ENCODE measurements at regions of chr12 and their contacts with region 1.

Region 1: DNA sequence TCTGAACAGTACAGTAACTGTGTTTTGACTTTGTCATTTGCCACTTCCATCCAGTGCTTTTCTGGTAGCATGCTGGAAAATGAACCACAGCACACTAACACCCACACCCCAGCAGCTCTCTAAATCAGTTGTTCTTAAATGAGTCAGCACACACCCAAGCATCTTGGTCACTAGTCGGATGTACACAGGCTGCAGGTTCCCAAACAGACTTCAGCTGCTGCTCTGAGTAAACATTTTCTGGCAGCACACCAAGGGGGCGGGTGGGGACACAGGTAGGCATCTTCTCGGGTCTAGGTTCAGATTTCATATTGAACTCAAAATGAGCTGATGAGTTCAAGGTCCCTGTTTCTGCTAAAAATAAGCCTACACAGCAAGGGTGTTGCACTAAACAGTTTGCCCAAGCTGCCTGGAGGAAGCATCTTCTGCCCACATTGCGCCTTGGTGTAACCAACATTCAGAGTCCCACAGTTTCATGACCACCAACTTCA is 39.8 kb downstream of the IFNG start:
- DNase-seq: peak; percentile 74
- H3K4me3 Mint-ChIP-seq: peak overlapping the region; percentile 15
- H3K27ac Mint-ChIP-seq: no peak overlapping the region
- H3K4me1 Mint-ChIP-seq: peaks cover 48% of the 10 kb centered on the region
- H3K27me3 Mint-ChIP-seq: no peaks in the 10 kb centered on the region

Region 2: DNA sequence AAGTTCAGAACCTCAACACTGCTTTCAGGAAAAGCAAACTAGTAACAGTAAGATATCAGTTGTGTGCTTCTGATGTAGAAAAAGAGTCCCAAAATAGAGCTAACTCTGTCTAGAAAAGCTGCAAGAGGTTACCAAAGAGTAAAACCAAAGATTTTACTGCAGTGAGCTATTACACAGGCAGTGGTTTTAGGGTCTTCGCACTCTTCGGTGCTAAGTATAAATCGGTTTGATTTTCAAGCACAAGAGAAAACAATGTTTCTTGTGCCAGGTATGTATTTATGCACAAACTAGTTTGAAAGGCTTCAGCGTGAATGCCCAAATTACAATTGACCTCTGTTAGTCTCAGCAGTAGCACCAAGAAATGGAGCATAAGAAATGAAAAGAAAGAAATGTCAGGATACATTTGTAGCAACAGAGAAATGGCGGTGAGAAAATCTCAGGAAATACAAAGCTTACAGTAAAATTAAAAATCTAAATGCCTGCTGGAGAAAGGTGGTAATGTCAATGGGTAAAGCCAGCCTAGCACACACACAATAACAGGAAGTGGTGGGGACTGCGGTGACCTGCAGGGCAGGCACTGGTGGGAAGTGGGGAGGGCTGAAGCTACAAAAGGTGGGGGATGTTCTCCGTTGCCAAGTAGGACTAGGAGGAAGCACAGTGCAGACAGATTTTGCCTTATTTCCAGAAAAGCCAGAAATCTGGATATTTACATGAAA is 489.2 kb before region 1 on chr12:
- intact Hi-C with region 1: loop called (anchors 5 kb)
- DNase-seq: peak; percentile 81
- H3K4me3 Mint-ChIP-seq: peak overlapping the region; percentile 37
- H3K27ac Mint-ChIP-seq: peak overlapping the region; percentile 89
- H3K4me1 Mint-ChIP-seq: peaks cover 62% of the 10 kb centered on the region
- H3K27me3 Mint-ChIP-seq: no peaks in the 10 kb centered on the region

Region 3: GRCh38 chr12:67996347-67996746 is 123.4 kb before region 1 on chr12:
- intact Hi-C with region 1: loop called (anchors 1 kb)
- DNase-seq: no peak
- H3K4me3 Mint-ChIP-seq: no peak overlapping the region
- H3K27ac Mint-ChIP-seq: peak overlapping the region; percentile 1
- H3K4me1 Mint-ChIP-seq: peaks cover 69% of the 10 kb centered on the region
- H3K27me3 Mint-ChIP-seq: no peaks in the 10 kb centered on the region

Region 4: GRCh38 chr12:68137335-68137830 is 17.6 kb after region 1 on chr12:
- intact Hi-C with region 1: loop called (anchors 1 kb)
- DNase-seq: no peak
- H3K4me3 Mint-ChIP-seq: peak overlapping the region; percentile 61
- H3K27ac Mint-ChIP-seq: peak overlapping the region; percentile 91
- H3K4me1 Mint-ChIP-seq: peaks cover 75% of the 10 kb centered on the region
- H3K27me3 Mint-ChIP-seq: no peaks in the 10 kb centered on the region

Region 5: GRCh38 chr12:68180792-68181744 is 61.3 kb after region 1 on chr12:
- intact Hi-C with region 1: loop called (anchors 1 kb)
- DNase-seq: peak; percentile 67
- H3K4me3 Mint-ChIP-seq: peak overlapping the region; percentile 34
- H3K27ac Mint-ChIP-seq: peak overlapping the region; percentile 91
- H3K4me1 Mint-ChIP-seq: peaks cover 85% of the 10 kb centered on the region
- H3K27me3 Mint-ChIP-seq: no peaks in the 10 kb centered on the region

Region 6: GRCh38 chr12:68267892-68268396 is 148.2 kb after region 1 on chr12:
- intact Hi-C with region 1: loop called (anchors 2 kb)
- DNase-seq: peak; percentile 24
- H3K4me3 Mint-ChIP-seq: peak overlapping the region; percentile 51
- H3K27ac Mint-ChIP-seq: peak overlapping the region; percentile 84
- H3K4me1 Mint-ChIP-seq: peaks cover 71% of the 10 kb centered on the region
- H3K27me3 Mint-ChIP-seq: peaks cover 4% of the 10 kb centered on the region

Region 7: GRCh38 chr12:68451261-68452077 is 331.7 kb after region 1 on chr12:
- intact Hi-C with region 1: loop called (anchors 2 kb)
- DNase-seq: peak; percentile 53
- H3K4me3 Mint-ChIP-seq: peak overlapping the region; percentile 73
- H3K27ac Mint-ChIP-seq: peak overlapping the region; percentile 97
- H3K4me1 Mint-ChIP-seq: peaks cover 99% of the 10 kb centered on the region
- H3K27me3 Mint-ChIP-seq: no peaks in the 10 kb centered on the region

Region 8: DNA sequence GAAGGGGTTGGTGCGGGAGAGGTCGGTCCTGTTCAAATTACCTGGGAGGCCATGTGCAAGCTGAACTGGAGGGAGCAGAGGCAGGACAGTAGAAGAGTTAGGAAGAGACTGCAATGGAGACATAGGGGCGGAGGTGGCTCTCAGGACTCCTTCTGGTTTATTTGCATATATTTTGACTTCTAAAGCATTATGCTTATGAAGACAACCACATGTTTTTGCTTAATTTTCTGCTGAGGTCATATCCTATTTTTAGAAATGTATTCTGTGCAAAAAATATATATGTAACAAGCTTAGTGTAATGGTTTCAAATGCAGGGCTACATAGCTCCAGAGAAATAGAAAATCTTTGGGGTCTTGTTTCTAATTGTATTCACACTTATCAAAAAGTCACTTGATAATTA is 349.3 kb after region 1 on chr12:
- intact Hi-C with region 1: no loop called
- DNase-seq: no peak
- H3K4me3 Mint-ChIP-seq: no peak overlapping the region
- H3K27ac Mint-ChIP-seq: no peak overlapping the region
- H3K4me1 Mint-ChIP-seq: peaks cover 16% of the 10 kb centered on the region
- H3K27me3 Mint-ChIP-seq: no peaks in the 10 kb centered on the region

Measured in activated T-helper 1 cell treated with anti-CD3 and anti-CD28 coated beads, Interleukin-12 subunit alpha, Interleukin-12 subunit beta, Interleukin-2, Interleukin-4 antibody, amounts not matched to agents 30 ng/mL and 10 ng/mL and 1 ng/mL, durations not matched to agents 14 hours and 24 hours and 36 hours (primary cell).